A673 (cell line): ENCODE measurements at regions of chr2 and their contacts with region 1.

Region 1: GRCh38 chr2:139492131-139492680 is 712.0 kb upstream of the NXPH2 start:
- DNase-seq: no peak
- H3K4me3 ChIP-seq: no peak overlapping the region
- H3K27ac ChIP-seq: no peak overlapping the region
- H3K4me1 ChIP-seq: no peaks in the 10 kb centered on the region
- H3K27me3 ChIP-seq: no peaks in the 10 kb centered on the region
- CTCF ChIP-seq: no peak

Region 2: DNA sequence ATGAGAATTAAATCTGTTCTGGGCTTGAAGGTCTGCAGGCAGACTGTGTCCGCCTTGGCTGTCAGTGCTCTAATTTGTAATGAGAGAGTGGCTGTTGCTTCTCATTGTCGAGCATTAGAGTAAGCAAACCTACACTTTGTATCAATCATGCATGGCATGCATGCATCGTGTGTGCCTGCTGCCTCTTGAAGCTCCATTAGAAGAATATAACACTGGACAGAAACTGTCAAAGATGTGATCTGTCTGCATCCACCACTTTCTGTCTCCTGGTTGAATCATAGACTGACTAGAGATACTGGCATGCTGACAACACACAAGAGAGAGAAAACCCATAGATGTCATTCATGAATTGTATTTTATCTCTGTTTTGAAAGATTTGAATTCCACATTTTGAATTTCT is 437.0 kb before region 1 on chr2:
- CTCF ChIA-PET with region 1: no interaction called
- POLR2A ChIA-PET with region 1: interaction called, 12 read pairs
- intact Hi-C with region 1: no loop called
- DNase-seq: no peak
- H3K4me3 ChIP-seq: no peak overlapping the region
- H3K27ac ChIP-seq: no peak overlapping the region
- H3K4me1 ChIP-seq: no peaks in the 10 kb centered on the region
- H3K27me3 ChIP-seq: no peaks in the 10 kb centered on the region
- CTCF ChIP-seq: no peak

Region 3: GRCh38 chr2:139585101-139585500 is 92.9 kb after region 1 on chr2:
- CTCF ChIA-PET with region 1: no interaction called
- POLR2A ChIA-PET with region 1: no interaction called
- intact Hi-C with region 1: no loop called
- DNase-seq: no peak
- H3K4me3 ChIP-seq: no peak overlapping the region
- H3K27ac ChIP-seq: no peak overlapping the region
- H3K4me1 ChIP-seq: no peaks in the 10 kb centered on the region
- H3K27me3 ChIP-seq: no peaks in the 10 kb centered on the region
- CTCF ChIP-seq: no peak